WTC11 (cell line): ENCODE measurements at regions of chr12 and their contacts with region 1.

Region 1: GRCh38 chr12:56198836-56199235 is 9.6 kb upstream of the SMARCC2 start:
- DNase-seq: no peak
- ATAC-seq: peak; percentile 58
- H3K4me3 Mint-ChIP-seq: no peak overlapping the region
- H3K27ac Mint-ChIP-seq: peak overlapping the region; percentile 64
- H3K4me1 Mint-ChIP-seq: peaks cover 20% of the 10 kb centered on the region
- H3K27me3 Mint-ChIP-seq: no peaks in the 10 kb centered on the region
- CTCF ChIP-seq: no peak

Region 2: DNA sequence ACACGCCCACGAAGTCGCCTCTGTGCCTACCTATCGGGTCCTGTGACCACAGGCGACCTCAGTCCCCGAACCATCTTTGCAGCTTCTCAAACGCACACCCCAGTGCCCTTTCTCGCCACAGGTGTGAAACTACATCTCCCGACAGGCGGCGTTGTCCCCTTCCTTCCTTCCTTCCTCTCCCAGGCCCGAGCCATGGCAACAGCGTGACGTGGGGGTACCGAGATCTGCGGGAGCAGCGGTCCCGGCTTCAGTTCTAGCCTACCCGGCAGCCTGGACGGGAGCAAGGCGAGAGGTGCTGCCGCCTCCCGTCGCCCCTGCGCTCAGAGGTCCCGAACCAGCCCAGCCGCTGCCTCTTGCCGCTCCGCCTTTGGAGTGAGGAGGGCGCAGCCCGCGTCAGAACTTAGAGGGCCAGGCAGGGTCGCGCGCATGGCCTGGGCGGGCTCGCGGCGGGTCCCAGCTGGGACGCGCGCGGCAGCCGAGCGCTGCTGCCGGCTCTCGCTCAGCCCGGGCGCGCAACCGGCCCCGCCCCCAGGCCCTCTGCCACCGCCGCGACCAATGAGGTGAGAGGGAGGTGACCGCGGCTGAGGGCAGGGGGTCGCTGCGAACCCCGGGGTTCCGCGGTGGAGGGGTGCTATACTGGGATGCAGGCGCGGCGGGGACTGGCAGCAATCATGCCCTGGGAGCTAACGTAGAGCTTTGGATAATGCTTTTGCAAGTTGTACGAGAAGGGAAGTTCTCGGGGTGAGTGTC is 68.0 kb after region 1 on chr12 and contains the start of gene COQ10A:
- CTCF ChIA-PET with region 1: interaction called, 10 read pairs
- POLR2A ChIA-PET with region 1: no interaction called
- DNase-seq: peak; percentile 92
- ATAC-seq: peak; percentile 87
- H3K4me3 Mint-ChIP-seq: peak within 1 kb of the TSS; percentile 84
- H3K27ac Mint-ChIP-seq: peak within 1 kb of the TSS; percentile 97
- H3K4me1 Mint-ChIP-seq: peaks cover 14% of the 10 kb centered on the region
- H3K27me3 Mint-ChIP-seq: no peaks in the 10 kb centered on the region
- CTCF ChIP-seq: no peak
- total RNA-seq, gene COQ10A: 22.7 to 26.2 TPM (median 24.4 TPM) in 3 replicates

Region 3: DNA sequence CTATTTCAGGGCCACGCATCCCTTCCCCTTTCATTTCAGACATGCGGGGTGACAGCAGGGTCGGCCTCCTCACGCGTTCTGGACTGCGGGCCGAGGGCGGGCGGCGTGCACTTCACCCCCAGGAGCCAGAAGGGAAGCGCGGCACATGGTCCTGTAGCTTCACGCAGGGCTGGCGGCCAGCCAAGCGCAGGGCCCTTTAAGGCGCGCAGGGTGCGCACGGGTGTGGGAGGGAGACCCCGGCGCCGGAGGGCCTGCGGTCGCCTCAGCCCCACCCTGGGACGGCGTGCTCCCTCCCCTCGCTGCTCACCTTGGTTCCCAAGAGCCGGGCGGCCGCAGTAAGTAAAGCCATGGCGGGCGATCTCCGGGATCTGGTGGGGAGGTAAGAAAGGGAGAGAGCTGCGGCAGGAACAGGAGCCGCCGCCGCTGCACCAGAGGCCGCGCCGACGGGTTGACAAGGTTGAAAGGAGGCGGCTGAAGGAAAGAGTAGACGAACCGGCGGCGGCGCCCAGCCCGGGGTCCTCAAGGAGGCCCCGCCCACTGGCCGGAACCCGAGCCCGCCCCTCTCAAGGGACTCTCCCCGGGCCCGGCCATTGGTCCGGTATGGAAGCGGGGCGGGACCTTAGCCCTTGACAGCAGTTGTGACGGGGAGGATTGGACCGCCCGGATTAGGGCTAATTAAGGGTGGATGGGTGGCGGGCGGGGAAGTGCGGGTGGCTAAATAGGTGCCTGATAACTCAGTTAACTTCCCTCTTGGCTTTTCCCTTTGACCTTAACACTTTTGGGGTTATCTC is 101.2 kb after region 1 on chr12 and contains the start of gene CS:
- CTCF ChIA-PET with region 1: no interaction called
- POLR2A ChIA-PET with region 1: no interaction called
- DNase-seq: peak; percentile 99
- ATAC-seq: peak; percentile 98
- H3K4me3 Mint-ChIP-seq: peak within 1 kb of the TSS; percentile 92
- H3K27ac Mint-ChIP-seq: peak within 1 kb of the TSS; percentile 99
- H3K4me1 Mint-ChIP-seq: peaks cover 26% of the 10 kb centered on the region
- H3K27me3 Mint-ChIP-seq: no peaks in the 10 kb centered on the region
- CTCF ChIP-seq: no peak
- total RNA-seq, gene CS: 241 to 275 TPM (median 246 TPM) in 3 replicates

Region 4: DNA sequence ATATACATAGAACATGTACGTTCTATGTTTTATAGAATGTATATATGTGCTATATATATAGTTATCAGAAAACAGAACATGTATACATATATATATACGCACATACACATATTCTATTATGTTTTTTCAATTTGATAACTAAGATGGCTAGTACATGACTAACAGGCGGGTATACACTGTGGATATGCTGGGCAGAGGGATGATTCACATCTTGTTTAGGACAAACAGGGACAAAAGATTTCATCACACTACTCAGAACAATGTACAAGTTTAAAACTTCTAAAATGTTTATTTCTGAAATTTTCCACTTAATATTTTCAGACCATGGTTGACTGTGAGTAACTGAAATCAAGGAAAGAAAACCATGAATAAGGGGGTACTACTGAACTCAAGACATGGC is 233.0 kb after region 1 on chr12:
- CTCF ChIA-PET with region 1: no interaction called
- POLR2A ChIA-PET with region 1: no interaction called
- DNase-seq: no peak
- ATAC-seq: no peak
- H3K4me3 Mint-ChIP-seq: no peak overlapping the region
- H3K27ac Mint-ChIP-seq: no peak overlapping the region
- H3K4me1 Mint-ChIP-seq: no peaks in the 10 kb centered on the region
- H3K27me3 Mint-ChIP-seq: no peaks in the 10 kb centered on the region
- CTCF ChIP-seq: no peak

Region 5: GRCh38 chr12:56636675-56637540 is 438.1 kb after region 1 on chr12:
- CTCF ChIA-PET with region 1: no interaction called
- POLR2A ChIA-PET with region 1: no interaction called
- DNase-seq: peak; percentile 99
- ATAC-seq: peak; percentile 70
- H3K4me3 Mint-ChIP-seq: peak overlapping the region; percentile 97
- H3K27ac Mint-ChIP-seq: peak overlapping the region; percentile 99
- H3K4me1 Mint-ChIP-seq: peaks cover 42% of the 10 kb centered on the region
- H3K27me3 Mint-ChIP-seq: no peaks in the 10 kb centered on the region
- CTCF ChIP-seq: peak; percentile 41; the same call in 1 of the 2 replicates